ENCODE measurements at regions of chr10 and their contacts with region 1.

Region 1: DNA sequence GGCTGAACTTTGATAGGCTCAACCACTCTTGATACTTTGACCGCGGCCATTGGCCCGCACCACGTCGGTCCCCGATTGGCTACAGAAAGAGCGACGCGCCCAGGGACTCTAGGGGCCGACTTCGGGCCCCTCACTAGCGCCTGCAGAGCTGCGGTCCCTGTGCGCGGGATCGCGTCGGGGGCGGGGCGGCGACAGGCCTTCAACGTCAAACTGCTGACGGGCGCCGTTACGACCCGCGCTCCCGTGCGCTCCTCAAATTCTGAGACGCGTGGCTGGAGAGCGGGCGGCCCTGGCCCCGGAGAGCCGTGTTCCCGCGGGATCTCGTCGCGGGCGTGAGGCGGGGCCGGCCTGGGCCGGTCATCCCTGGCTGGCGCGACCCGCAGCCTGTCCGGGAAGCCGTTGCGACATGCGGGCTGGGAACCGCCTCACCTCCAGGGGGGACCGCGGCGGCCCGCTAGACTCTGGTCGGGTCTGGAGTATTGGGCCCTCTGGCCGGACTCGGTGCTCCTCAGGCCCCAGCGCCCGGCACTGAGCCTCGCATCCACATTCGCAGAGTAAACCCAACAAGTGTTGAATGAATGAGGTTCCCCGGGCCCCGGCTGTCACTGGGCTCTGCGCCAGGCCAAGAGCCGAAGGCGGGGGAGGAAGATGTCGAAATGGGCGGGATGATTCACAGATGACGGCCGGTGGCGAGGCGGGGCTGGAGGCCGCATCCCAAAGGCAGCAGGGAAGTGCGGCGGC is 644 bp upstream of the SLC25A28 start:
- DNase-seq: peak; percentile 76 to 97 (median 88)
- H3K4me3 ChIP-seq: peak overlapping the region; percentile 24 to 71
- H3K4me3 Mint-ChIP-seq: peak overlapping the region; percentile 81 to 96 (median 92)
- H3K27ac ChIP-seq: peak overlapping the region; percentile 93
- H3K27ac Mint-ChIP-seq: peak overlapping the region; percentile 90 to 98 (median 97)
- H3K4me1 ChIP-seq: peaks cover 47% of the 10 kb centered on the region
- H3K4me1 Mint-ChIP-seq: peaks cover 33 to 60% (median 43%) of the 10 kb centered on the region in 4 donors
- H3K27me3 ChIP-seq: no peaks in the 10 kb centered on the region
- H3K27me3 Mint-ChIP-seq: no peaks in the 10 kb centered on the region

Region 2: GRCh38 chr10:98134431-98135221 is 1486.3 kb before region 1 on chr10 and contains the start of gene R3HCC1L:
- CTCF ChIA-PET with region 1: no interaction called
- POLR2A ChIA-PET with region 1: interaction called, 3 read pairs
- intact Hi-C with region 1: loop called (anchors 2 kb)
- DNase-seq: peak; percentile 89 to 95 (median 92)
- H3K4me3 ChIP-seq: peak within 1 kb of the TSS; percentile 83 to 84
- H3K4me3 Mint-ChIP-seq: peak within 1 kb of the TSS; percentile 77 to 93 (median 87)
- H3K27ac ChIP-seq: peak within 1 kb of the TSS; percentile 97
- H3K27ac Mint-ChIP-seq: peak within 1 kb of the TSS; percentile 89 to 98 (median 95)
- H3K4me1 ChIP-seq: peaks cover 43% of the 10 kb centered on the region
- H3K4me1 Mint-ChIP-seq: peaks cover 28 to 54% (median 43%) of the 10 kb centered on the region in 4 donors
- H3K27me3 ChIP-seq: no peaks in the 10 kb centered on the region
- H3K27me3 Mint-ChIP-seq: no peaks in the 10 kb centered on the region
- total RNA-seq, gene R3HCC1L: 27.2 to 30.4 TPM

Region 3: GRCh38 chr10:98971464-98971863 is 649.4 kb before region 1 on chr10:
- CTCF ChIA-PET with region 1: no interaction called
- POLR2A ChIA-PET with region 1: no interaction called
- intact Hi-C with region 1: no loop called
- DNase-seq: no peak
- H3K4me3 ChIP-seq: no peak overlapping the region
- H3K4me3 Mint-ChIP-seq: no peak overlapping the region
- H3K27ac ChIP-seq: no peak overlapping the region
- H3K27ac Mint-ChIP-seq: no peak overlapping the region
- H3K4me1 ChIP-seq: no peaks in the 10 kb centered on the region
- H3K4me1 Mint-ChIP-seq: no peaks in the 10 kb centered on the region
- H3K27me3 ChIP-seq: no peaks in the 10 kb centered on the region
- H3K27me3 Mint-ChIP-seq: no peaks in the 10 kb centered on the region

Region 4: DNA sequence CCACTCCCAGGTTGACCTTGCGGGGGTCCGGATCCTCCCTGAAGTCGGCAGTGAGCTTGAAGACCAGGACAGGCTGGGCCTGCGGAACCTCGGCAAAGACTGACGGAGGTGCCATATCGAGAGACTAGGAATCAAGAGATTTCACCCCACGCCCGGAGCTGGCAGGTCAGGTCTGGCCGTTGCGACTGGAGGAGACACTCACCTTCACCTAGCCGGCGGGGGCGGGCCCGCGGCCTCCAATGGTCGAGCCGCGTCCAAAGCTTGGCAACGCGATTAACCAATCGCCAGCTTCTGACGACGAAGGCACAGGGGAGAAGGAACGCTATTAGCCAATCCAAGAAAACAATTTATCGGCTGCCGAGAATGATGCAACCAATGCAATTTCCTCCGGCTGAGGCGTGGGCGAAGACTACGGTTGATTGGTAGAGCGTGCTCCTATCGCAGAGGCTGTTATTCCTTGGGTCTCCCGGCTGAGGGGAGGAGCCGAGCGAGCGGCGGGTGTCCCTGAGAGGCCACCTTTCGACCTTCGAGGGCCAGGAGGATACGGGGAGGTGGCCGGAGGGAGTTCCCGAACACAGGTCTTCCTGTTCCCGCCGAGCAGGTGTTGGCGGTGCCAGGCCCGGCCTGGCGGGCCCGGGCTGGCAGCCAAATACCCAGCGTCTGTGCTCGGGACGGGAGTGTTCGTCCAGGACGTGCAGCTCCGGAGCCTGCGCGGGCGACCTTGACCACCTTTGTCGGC is 190.3 kb before region 1 on chr10 and contains the start of gene GOT1:
- CTCF ChIA-PET with region 1: interaction called, 10 read pairs
- POLR2A ChIA-PET with region 1: interaction called, 25 read pairs
- intact Hi-C with region 1: loop called (anchors 1 kb)
- DNase-seq: peak; percentile 93 to 97 (median 95)
- H3K4me3 ChIP-seq: peak within 1 kb of the TSS; percentile 88 to 96
- H3K4me3 Mint-ChIP-seq: peak within 1 kb of the TSS; percentile 96 to 99 (median 97)
- H3K27ac ChIP-seq: peak within 1 kb of the TSS; percentile 76
- H3K27ac Mint-ChIP-seq: peak within 1 kb of the TSS; percentile 91 to 99 (median 98)
- H3K4me1 ChIP-seq: peaks cover 21% of the 10 kb centered on the region
- H3K4me1 Mint-ChIP-seq: peaks cover 20 to 45% (median 34%) of the 10 kb centered on the region in 4 donors
- H3K27me3 ChIP-seq: no peaks in the 10 kb centered on the region
- H3K27me3 Mint-ChIP-seq: peaks cover 0 to 2% of the 10 kb centered on the region in 2 donors
- total RNA-seq, gene GOT1: 10.3 to 10.4 TPM

Region 5: DNA sequence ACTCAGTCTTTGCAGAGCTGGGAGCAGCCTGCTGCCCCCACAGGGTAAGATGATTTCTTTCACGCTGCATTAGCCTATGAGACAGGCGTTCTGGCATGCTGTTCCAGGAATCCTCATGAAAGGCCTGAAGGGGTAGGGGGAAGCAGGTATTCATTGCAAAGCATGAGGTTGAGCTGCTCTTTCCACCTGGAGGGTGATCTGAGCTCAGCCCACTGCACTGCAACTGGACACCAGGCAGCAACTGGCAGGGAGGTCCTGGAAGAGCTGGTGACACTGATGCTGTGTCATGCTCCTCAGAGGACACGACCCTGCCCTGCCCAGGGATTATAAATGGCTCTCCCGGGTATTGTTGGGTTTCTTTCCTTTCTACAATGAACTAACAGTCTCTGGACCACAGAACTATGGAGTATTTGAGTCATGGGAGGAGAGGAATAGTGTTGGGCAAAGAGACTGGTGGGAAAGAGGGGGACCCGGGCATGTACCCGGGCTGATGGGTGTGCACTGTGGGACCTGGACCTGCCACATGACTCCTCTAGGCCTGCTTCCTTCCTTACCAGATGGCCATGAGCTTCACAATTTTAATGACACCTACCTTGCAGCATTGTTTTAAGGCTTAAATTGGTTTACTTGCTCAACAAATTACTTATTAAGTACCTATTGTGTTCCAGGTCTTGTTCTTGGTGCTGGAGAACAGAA is 25.0 kb before region 1 on chr10:
- CTCF ChIA-PET with region 1: no interaction called
- POLR2A ChIA-PET with region 1: no interaction called
- intact Hi-C with region 1: no loop called
- DNase-seq: no peak
- H3K4me3 ChIP-seq: no peak overlapping the region
- H3K4me3 Mint-ChIP-seq: no peak overlapping the region
- H3K27ac ChIP-seq: no peak overlapping the region
- H3K27ac Mint-ChIP-seq: no peak overlapping the region
- H3K4me1 ChIP-seq: no peaks in the 10 kb centered on the region
- H3K4me1 Mint-ChIP-seq: no peaks in the 10 kb centered on the region
- H3K27me3 ChIP-seq: no peaks in the 10 kb centered on the region
- H3K27me3 Mint-ChIP-seq: peaks cover 4 to 15% of the 10 kb centered on the region in 2 donors

Region 6: DNA sequence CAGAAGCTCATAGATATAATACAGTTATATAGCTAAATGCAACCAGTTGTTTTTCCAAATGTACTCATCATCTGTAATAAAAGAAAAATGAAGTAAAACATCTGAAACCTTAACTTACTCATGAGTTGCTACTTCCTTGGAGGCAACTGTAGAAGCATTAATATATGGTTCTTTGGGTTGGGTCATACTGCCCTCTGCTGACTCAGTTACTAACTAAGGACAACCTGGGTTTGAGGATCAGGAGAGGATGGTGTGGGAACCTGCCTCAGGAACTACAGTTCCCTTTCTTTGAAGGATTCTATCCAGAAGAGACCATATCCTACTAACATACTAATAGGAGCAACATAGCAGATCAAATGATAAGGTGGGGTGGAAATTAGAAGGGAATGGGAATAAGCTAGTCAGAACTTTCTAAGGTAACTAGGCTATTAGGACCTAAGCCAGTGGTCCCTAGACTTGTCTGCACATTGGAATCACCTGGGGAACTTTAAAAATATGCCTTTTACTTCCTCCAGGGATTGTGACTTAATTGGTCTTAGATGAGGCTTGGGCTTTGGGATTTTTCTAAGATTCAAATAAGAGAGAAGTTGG is 90.3 kb after region 1 on chr10:
- CTCF ChIA-PET with region 1: no interaction called
- POLR2A ChIA-PET with region 1: interaction called, 3 read pairs
- intact Hi-C with region 1: loop called (anchors 5 kb)
- DNase-seq: peak; percentile 24 to 34 (median 33)
- H3K4me3 ChIP-seq: no peak overlapping the region
- H3K4me3 Mint-ChIP-seq: no peak overlapping the region
- H3K27ac ChIP-seq: no peak overlapping the region
- H3K27ac Mint-ChIP-seq: peak overlapping the region in 2 of 7 donors; percentile 31 to 80
- H3K4me1 ChIP-seq: no peaks in the 10 kb centered on the region
- H3K4me1 Mint-ChIP-seq: peaks cover 0 to 2% (median 0%) of the 10 kb centered on the region in 4 donors
- H3K27me3 ChIP-seq: no peaks in the 10 kb centered on the region
- H3K27me3 Mint-ChIP-seq: no peaks in the 10 kb centered on the region

Region 7: DNA sequence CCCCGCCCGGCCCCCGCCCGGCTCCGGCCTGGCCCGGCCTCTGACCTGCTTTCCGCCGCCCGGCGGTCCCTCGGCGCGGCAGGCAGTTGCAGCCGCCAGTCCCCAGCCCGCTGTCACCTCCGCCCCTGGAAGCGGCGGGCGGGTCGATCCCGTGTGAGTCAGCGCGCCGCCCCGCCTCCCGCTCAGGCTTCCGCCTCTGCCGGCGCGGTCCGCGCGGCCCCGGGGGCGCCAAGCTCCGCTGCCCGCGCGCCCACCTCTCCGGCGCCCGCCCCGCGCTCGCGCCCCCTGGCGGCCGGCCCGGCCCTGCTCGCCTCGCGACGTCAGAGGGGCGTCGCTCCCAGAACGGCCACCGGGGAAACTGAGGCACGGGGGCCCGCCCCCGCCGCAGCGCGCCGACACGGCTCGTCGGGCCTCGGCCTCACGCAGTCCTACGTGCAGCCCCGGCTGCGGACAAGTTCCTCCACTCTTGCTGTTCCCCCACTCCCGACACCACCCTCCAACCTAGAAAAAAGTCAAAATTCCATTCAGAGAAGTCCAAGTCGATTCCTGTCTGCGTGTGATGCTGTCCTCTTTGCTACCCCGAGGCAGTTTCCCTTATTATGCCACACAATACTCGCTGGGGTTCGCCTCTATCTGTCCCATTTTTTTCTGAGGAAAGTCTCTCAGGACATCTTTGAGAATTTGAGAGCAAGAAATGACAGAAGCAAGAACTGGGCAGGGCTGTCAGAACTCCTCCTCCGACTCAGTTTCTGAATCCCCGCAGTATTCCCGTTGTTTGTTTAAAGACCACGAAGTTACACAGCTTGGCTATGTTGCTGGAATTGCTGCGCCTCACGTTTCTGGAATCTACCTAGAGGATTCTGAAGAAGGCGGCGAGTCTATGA is 389.2 kb after region 1 on chr10 and contains the start of gene DNMBP:
- CTCF ChIA-PET with region 1: no interaction called
- POLR2A ChIA-PET with region 1: no interaction called
- intact Hi-C with region 1: loop called (anchors 1 kb)
- DNase-seq: peak; percentile 75 to 81 (median 79)
- H3K4me3 ChIP-seq: peak within 1 kb of the TSS; percentile 65 to 89
- H3K4me3 Mint-ChIP-seq: peak within 1 kb of the TSS; percentile 89 to 97 (median 95)
- H3K27ac ChIP-seq: peak within 1 kb of the TSS; percentile 34
- H3K27ac Mint-ChIP-seq: peak within 1 kb of the TSS; percentile 76 to 93 (median 90)
- H3K4me1 ChIP-seq: peaks cover 19% of the 10 kb centered on the region
- H3K4me1 Mint-ChIP-seq: peaks cover 22 to 48% (median 31%) of the 10 kb centered on the region in 4 donors
- H3K27me3 ChIP-seq: no peaks in the 10 kb centered on the region
- H3K27me3 Mint-ChIP-seq: peaks cover 0 to 3% of the 10 kb centered on the region in 2 donors
- total RNA-seq, gene DNMBP: 3.8 to 4.0 TPM

Measured in CD4-positive, alpha-beta memory T cell (primary cell).